ENCODE measurements at regions of chr9 and their contacts with region 1.

Region 1: GRCh38 chr9:135961277-135961705 is at the start of gene UBAC1:
- DNase-seq: peak; percentile 88 to 98 (median 95)
- ATAC-seq: peak; percentile 88
- H3K4me3 ChIP-seq: peak within 1 kb of the TSS; percentile 73 to 76
- H3K4me3 Mint-ChIP-seq: peak within 1 kb of the TSS; percentile 88
- H3K27ac ChIP-seq: peak within 1 kb of the TSS; percentile 39 to 45
- H3K27ac Mint-ChIP-seq: peak within 1 kb of the TSS; percentile 82
- H3K4me1 ChIP-seq: peaks cover 15% of the 10 kb centered on the region
- H3K4me1 Mint-ChIP-seq: peaks cover 31% of the 10 kb centered on the region
- H3K27me3 ChIP-seq: no peaks in the 10 kb centered on the region
- H3K27me3 Mint-ChIP-seq: no peaks in the 10 kb centered on the region
- CTCF ChIP-seq: peak; percentile 26
- total RNA-seq, gene UBAC1: 18.5 to 22.0 TPM

Region 2: DNA sequence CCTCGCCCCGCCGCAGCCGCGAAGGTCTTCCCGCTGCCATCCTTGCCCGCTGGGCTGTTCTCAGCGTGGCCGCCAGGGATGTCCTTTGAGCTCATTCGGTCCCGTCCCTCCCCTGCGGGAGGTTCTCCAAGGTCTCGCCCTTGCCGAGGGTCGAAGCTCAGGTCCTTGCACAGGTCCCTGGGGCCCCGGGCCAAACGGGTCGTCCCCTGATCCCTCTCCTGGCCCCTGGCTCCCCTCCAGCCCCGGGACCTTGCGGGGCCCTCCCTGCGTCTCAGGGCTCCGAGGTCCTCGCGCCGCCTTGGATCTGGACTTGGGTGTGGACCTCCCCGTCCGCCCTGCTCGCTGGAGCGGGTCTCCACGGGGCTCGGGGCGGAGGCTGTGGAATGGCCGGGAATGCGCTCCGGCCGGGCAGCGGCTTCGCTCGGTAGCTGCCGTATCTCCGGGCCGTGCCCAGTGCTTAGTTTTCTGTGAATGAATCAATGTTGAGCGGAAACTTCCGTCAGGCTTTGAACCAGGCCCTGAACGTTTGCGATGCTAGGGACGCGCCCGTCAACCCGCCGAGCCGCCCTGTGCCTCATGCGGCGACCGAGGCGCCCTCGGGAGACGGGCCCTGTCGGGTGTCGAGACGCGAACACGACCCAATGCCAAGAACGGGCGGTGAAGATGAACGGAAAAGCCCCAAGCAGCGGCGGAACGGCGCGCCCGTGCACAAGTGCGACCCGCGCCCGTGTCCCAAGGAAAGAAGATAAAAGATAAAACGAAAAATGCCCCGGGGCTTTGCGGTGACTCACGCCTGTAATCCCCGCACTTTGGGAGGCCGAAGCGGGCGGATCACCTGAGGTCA is 1797.7 kb before region 1 on chr9:
- CTCF ChIA-PET with region 1: no interaction called
- POLR2A ChIA-PET with region 1: no interaction called
- intact Hi-C with region 1: loop called in 1 of 2 experiments (anchors 10 kb)
- DNase-seq: peak; percentile 38 to 87 (median 68)
- ATAC-seq: peak; percentile 19
- H3K4me3 ChIP-seq: no peak overlapping the region
- H3K4me3 Mint-ChIP-seq: no peak overlapping the region
- H3K27ac ChIP-seq: no peak overlapping the region
- H3K27ac Mint-ChIP-seq: no peak overlapping the region
- H3K4me1 ChIP-seq: peaks cover 18% of the 10 kb centered on the region
- H3K4me1 Mint-ChIP-seq: peaks cover 17% of the 10 kb centered on the region
- H3K27me3 ChIP-seq: no peaks in the 10 kb centered on the region
- H3K27me3 Mint-ChIP-seq: no peaks in the 10 kb centered on the region
- CTCF ChIP-seq: peak; percentile 32

Region 3: DNA sequence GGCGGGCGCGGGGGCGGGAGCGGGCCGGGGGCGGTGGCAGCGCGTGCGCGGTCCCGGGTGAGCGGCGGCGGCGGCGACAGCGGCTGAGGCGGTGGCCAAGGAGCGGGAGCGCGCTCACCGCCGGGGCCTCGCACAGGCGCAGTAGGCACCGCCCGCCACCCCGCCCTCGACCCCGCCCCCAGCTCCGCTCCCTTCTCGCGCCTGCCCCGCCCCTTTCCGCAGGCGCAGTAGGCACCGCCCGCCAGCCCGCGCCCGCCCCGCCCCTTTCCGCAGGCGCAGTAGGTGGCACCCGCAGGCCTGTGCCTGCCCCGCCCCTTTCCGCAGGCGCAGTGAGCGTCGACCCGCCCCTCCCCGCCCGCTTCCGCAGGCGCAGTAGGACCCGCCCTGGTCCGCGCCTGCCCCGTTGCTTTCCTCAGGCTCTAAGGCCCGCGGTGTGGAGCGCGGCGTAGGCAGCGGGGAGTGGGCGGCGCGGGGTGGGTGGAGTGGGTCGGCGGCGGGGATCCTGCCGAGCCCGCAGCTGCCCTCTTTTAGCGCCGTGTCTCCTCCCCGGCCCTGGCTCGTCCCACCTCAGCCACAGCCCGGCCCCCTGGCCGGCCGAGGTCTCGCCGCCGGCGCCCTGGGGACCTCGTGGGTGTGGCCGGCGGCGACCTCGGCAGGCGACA is 53.7 kb before region 1 on chr9 and contains the start of gene CAMSAP1:
- CTCF ChIA-PET with region 1: no interaction called
- POLR2A ChIA-PET with region 1: no interaction called
- intact Hi-C with region 1: loop called (anchors 1 kb)
- DNase-seq: peak; percentile 90 to 98 (median 96)
- ATAC-seq: peak; percentile 87
- H3K4me3 ChIP-seq: peak within 1 kb of the TSS; percentile 67 to 78
- H3K4me3 Mint-ChIP-seq: peak within 1 kb of the TSS; percentile 88
- H3K27ac ChIP-seq: peak within 1 kb of the TSS; percentile 21 to 71
- H3K27ac Mint-ChIP-seq: peak within 1 kb of the TSS; percentile 86
- H3K4me1 ChIP-seq: peaks cover 27% of the 10 kb centered on the region
- H3K4me1 Mint-ChIP-seq: peaks cover 48% of the 10 kb centered on the region
- H3K27me3 ChIP-seq: no peaks in the 10 kb centered on the region
- H3K27me3 Mint-ChIP-seq: no peaks in the 10 kb centered on the region
- CTCF ChIP-seq: no peak
- total RNA-seq, gene CAMSAP1: 16.4 to 20.8 TPM

Region 4: GRCh38 chr9:136189394-136190236 is 228.3 kb after region 1 on chr9:
- CTCF ChIA-PET with region 1: no interaction called
- POLR2A ChIA-PET with region 1: no interaction called
- intact Hi-C with region 1: no loop called
- DNase-seq: no peak
- ATAC-seq: no peak
- H3K4me3 ChIP-seq: no peak overlapping the region
- H3K4me3 Mint-ChIP-seq: no peak overlapping the region
- H3K27ac ChIP-seq: no peak overlapping the region
- H3K27ac Mint-ChIP-seq: no peak overlapping the region
- H3K4me1 ChIP-seq: no peaks in the 10 kb centered on the region
- H3K4me1 Mint-ChIP-seq: no peaks in the 10 kb centered on the region
- H3K27me3 ChIP-seq: no peaks in the 10 kb centered on the region
- H3K27me3 Mint-ChIP-seq: peaks cover 33% of the 10 kb centered on the region
- CTCF ChIP-seq: no peak

Region 5: GRCh38 chr9:136245219-136246150 is 284.2 kb after region 1 on chr9 and contains the start of gene QSOX2:
- CTCF ChIA-PET with region 1: no interaction called
- POLR2A ChIA-PET with region 1: no interaction called
- intact Hi-C with region 1: loop called (anchors 2 kb)
- DNase-seq: peak; percentile 69 to 93 (median 82)
- ATAC-seq: peak; percentile 84
- H3K4me3 ChIP-seq: peak within 1 kb of the TSS; percentile 40 to 60
- H3K4me3 Mint-ChIP-seq: peak within 1 kb of the TSS; percentile 91
- H3K27ac ChIP-seq: peak within 1 kb of the TSS; percentile 33 to 37
- H3K27ac Mint-ChIP-seq: peak within 1 kb of the TSS; percentile 85
- H3K4me1 ChIP-seq: peaks cover 35% of the 10 kb centered on the region
- H3K4me1 Mint-ChIP-seq: peaks cover 32% of the 10 kb centered on the region
- H3K27me3 ChIP-seq: no peaks in the 10 kb centered on the region
- H3K27me3 Mint-ChIP-seq: no peaks in the 10 kb centered on the region
- CTCF ChIP-seq: no peak
- total RNA-seq, gene QSOX2: 13.8 to 14.2 TPM

Region 6: DNA sequence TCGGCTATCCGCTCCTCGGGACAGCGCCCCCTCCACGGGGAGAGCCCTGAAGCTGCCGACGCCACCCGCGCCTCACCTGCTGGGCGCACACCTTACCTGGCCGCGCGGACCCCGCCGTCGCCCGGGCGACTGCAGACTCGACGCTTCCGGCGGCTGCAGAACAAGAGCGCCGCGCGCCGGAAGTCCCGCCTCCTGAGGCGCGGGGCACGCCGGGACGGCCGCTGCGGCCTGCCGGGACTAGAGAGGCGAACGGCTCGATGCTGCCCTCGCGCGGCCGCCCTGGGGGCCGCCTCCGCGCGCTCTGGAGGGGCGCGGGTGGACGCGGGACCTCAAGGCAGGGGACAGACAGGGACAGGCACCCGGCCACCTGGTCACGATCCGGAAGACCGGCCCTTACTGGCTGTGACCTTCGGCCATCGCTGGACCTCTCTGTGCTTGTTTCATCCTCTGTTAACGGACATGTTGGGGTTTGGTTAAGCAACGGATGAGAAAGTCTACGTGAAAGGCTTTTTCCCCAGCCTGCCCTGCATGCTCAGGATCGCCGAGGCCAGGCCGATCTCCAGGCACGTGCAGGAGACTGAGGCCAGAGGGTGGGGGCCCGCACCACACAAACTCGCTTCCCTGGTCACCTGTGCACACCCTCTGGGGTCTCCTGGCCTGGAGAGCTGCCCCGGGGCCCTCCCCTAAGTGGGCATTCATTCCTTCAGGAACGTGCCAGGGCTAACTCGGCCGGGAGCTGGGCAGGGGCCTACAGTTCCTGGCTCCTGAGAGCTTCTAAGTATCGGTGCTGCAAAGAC is 438.9 kb after region 1 on chr9 and contains the start of gene SNAPC4:
- CTCF ChIA-PET with region 1: no interaction called
- POLR2A ChIA-PET with region 1: no interaction called
- intact Hi-C with region 1: loop called in 1 of 2 experiments (anchors 5 kb)
- DNase-seq: peak; percentile 69 to 94 (median 86)
- ATAC-seq: peak; percentile 70
- H3K4me3 ChIP-seq: peak within 1 kb of the TSS; percentile 60 to 66
- H3K4me3 Mint-ChIP-seq: peak within 1 kb of the TSS; percentile 85
- H3K27ac ChIP-seq: peak within 1 kb of the TSS in 1 of 2 experiments; percentile 47
- H3K27ac Mint-ChIP-seq: peak within 1 kb of the TSS; percentile 67
- H3K4me1 ChIP-seq: peaks cover 49% of the 10 kb centered on the region
- H3K4me1 Mint-ChIP-seq: peaks cover 40% of the 10 kb centered on the region
- H3K27me3 ChIP-seq: no peaks in the 10 kb centered on the region
- H3K27me3 Mint-ChIP-seq: no peaks in the 10 kb centered on the region
- CTCF ChIP-seq: peak; percentile 93
- total RNA-seq, gene SNAPC4: 6.7 TPM

Measured in CD8-positive, alpha-beta T cell (primary cell).